ENCODE measurements at regions of chr3 and their contacts with region 1.

Region 1: GRCh38 chr3:145522893-145523651 is 637.9 kb downstream of the PLOD2 start:
- DNase-seq: no peak
- H3K4me3 ChIP-seq: no peak overlapping the region
- H3K27ac ChIP-seq: no peak overlapping the region
- H3K4me1 ChIP-seq: no peaks in the 10 kb centered on the region
- H3K27me3 ChIP-seq: no peaks in the 10 kb centered on the region
- CTCF ChIP-seq: no peak
- POLR2A ChIP-seq: no peak

Region 2: GRCh38 chr3:144308396-144308795 is 1214.7 kb before region 1 on chr3:
- intact Hi-C with region 1: loop called (anchors 10 kb)
- DNase-seq: no peak
- H3K4me3 ChIP-seq: no peak overlapping the region
- H3K27ac ChIP-seq: no peak overlapping the region
- H3K4me1 ChIP-seq: no peaks in the 10 kb centered on the region
- H3K27me3 ChIP-seq: no peaks in the 10 kb centered on the region
- CTCF ChIP-seq: no peak
- POLR2A ChIP-seq: no peak

Region 3: DNA sequence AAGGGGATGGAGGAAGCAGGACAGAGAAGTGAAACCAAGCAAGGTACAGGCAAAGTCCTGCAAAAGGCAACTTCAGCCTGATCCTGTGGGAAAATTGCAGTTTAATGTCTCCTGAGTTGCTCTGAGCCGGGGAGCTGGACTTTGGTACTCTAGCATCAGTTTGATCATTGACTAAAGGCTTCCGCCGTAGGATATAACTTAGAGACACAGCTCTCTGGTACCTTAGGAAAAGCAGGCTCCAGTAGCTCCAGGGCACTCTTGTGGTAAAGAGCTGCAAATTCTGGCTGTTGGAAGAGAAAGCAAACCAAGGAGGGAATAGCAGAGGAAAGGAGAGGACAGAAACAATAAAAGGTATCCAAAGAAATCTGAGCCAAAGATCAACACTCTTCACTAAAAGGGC is 116.8 kb after region 1 on chr3:
- intact Hi-C with region 1: no loop called
- DNase-seq: no peak
- H3K4me3 ChIP-seq: no peak overlapping the region
- H3K27ac ChIP-seq: no peak overlapping the region
- H3K4me1 ChIP-seq: no peaks in the 10 kb centered on the region
- H3K27me3 ChIP-seq: no peaks in the 10 kb centered on the region
- CTCF ChIP-seq: no peak
- POLR2A ChIP-seq: no peak

Measured in breast epithelium (tissue), 4 donors.